Head of caudate nucleus (tissue), 42 donors: ENCODE measurements at regions of chr15 and their contacts with region 1.

Region 1: GRCh38 chr15:81265944-81266775 is 57.8 kb downstream of the STARD5 start:
- DNase-seq: peak; percentile 73 to 94 (median 87)

Region 2: GRCh38 chr15:80989518-80990478 is 276.4 kb before region 1 on chr15 and contains the start of gene MESD:
- intact Hi-C with region 1: loop called (anchors 10 kb)
- DNase-seq: peak; percentile 94 to 99 (median 98)

Region 3: GRCh38 chr15:81155375-81156218 is 110.6 kb before region 1 on chr15:
- intact Hi-C with region 1: loop called (anchors 5 kb)
- DNase-seq: peak in 18 of 42 donors; percentile 8 to 66 (median 30)